ENCODE measurements at regions of chr1 and their contacts with region 1.

Region 1: DNA sequence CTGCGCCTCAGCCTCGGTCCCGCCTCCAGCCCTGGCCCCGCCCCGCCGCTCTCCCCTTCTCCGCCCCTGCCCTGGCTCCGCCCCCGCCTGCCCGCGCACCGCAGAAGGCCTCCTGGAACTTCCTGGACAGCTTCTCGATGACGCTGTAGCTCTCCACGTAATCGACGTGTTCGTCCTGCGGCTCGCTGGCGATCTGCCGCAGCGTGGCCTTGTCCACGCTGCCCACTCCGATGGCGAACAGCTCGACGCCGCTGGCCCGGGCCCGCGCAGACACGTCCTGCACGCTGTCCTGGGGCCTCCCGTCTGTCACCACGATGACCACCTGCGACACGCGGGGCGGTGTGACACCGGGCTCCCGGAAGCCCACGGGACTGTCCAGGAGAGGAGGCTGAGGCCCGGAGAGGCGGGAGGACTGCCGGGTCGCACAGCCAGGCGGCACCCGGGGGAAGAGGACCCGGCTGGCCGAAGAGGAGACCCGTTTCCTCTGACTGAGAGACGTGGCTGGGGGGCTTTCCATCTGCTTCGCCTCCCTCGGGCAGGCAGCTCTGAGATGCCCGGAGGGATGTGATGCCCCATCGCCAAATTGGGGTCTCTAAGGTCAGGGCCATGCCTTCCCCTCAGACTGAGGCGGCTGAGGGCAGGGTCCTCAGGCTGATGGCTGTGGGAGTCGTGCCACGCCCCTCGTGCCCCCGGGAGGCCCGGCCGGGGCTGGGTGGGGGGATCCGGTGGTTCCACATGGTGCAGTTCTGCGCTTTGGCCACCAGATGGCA is 4.6 kb downstream of the MATN1 start:
- DNase-seq: peak; percentile 91
- ATAC-seq: peak; percentile 66
- H3K4me3 Mint-ChIP-seq: peak overlapping the region; percentile 84
- H3K27ac Mint-ChIP-seq: peak overlapping the region; percentile 94
- H3K4me1 Mint-ChIP-seq: peaks cover 19% of the 10 kb centered on the region
- H3K27me3 Mint-ChIP-seq: no peaks in the 10 kb centered on the region

Region 2: DNA sequence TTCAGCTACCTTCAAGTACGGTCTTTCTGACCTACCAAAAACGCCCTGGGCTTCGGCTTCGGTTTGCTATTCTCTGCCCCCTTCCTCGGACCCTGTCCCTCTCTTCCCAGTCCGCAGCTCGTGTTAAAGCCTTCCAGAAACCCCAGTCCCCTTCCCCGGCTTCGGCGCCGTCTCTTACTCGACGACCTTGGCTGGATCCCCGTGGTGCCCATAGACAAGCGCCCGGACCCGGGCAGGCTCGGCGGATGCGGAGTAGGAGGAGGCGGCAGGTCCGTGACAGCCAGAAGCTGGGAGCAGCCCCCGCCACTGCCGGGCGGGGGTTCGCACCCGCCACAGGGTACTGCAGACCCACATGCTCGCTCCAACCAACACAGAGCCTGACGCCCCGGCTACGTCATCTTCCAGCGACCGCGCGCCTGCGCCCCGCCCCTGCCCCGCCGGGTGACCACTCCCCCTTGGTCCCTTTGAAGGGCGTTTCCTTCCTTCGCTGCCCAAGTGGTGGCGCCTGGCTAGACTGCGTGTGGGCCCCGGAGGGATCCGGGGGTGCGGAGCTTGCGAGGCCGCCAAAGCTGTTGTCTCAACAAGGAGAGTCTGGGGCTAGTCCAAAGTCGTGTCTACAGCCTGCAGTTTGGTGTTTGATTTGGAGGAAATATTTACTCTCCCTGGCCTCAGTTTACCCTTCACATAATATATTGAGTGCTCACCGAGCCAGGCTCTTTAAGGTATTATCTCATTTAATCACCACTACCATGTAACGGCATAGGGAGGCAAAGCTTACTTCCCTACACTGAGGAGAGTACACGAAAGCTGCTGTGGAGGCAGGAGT is 1488.1 kb before region 1 on chr1 and contains the start of gene MECR:
- CTCF ChIA-PET with region 1: interaction called, 3 read pairs
- POLR2A ChIA-PET with region 1: no interaction called
- intact Hi-C with region 1: loop called (anchors 1 to 2 kb)
- DNase-seq: peak; percentile 97
- ATAC-seq: peak; percentile 97
- H3K4me3 Mint-ChIP-seq: peak within 1 kb of the TSS; percentile 94
- H3K27ac Mint-ChIP-seq: peak within 1 kb of the TSS; percentile 94
- H3K4me1 Mint-ChIP-seq: peaks cover 18% of the 10 kb centered on the region
- H3K27me3 Mint-ChIP-seq: peaks cover 9% of the 10 kb centered on the region
- total RNA-seq, gene MECR: 41.3 to 43.1 TPM

Region 3: DNA sequence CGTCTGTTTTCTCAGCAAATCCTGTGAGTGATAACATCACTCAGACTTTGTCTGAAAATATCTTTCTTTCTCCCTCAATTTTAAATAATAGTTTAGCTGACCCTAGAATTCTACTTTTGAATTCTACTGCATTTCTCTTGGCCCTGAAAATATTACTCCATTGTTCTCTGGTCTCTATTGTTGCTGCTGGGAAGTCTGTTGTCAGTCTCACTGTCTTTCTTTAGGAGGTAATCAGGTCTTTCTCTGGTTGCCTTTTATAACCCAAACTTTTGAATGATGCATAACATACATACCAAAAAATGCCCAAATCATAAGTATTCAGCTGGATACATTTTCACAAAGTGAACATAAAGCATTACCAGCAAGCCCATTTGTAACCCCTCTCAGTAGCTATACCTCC is 95.4 kb before region 1 on chr1:
- CTCF ChIA-PET with region 1: no interaction called
- POLR2A ChIA-PET with region 1: no interaction called
- intact Hi-C with region 1: no loop called
- DNase-seq: no peak
- ATAC-seq: no peak
- H3K4me3 Mint-ChIP-seq: no peak overlapping the region
- H3K27ac Mint-ChIP-seq: no peak overlapping the region
- H3K4me1 Mint-ChIP-seq: peaks cover 3% of the 10 kb centered on the region
- H3K27me3 Mint-ChIP-seq: peaks cover 26% of the 10 kb centered on the region

Region 4: GRCh38 chr1:30637183-30637980 is 81.4 kb before region 1 on chr1:
- CTCF ChIA-PET with region 1: no interaction called
- POLR2A ChIA-PET with region 1: no interaction called
- intact Hi-C with region 1: no loop called
- DNase-seq: no peak
- ATAC-seq: no peak
- H3K4me3 Mint-ChIP-seq: no peak overlapping the region
- H3K27ac Mint-ChIP-seq: no peak overlapping the region
- H3K4me1 Mint-ChIP-seq: no peaks in the 10 kb centered on the region
- H3K27me3 Mint-ChIP-seq: peaks cover 2% of the 10 kb centered on the region

Region 5: DNA sequence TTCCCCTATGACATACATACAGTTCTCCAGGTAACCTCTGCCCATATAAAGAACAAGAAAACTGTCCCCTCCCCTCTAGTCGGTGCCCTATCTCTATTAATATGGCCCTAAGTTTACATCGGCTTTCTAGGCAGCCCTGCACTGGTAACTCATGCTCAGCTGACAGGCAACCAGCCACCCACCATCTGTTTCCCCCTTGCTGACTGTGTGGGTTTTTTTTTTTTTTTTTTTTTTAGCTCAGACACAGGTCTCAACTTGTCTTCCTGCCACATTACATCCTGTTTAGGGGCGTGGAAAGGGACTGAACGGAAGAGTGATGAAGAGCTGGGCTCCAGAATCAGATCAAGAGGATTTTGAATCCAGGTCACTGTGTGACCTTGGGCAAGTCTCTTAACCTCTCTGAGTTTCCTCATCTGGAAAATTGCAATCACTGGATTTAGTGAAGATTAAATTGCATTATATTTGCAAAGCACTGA is 24.8 kb after region 1 on chr1:
- CTCF ChIA-PET with region 1: interaction called, 47 read pairs
- POLR2A ChIA-PET with region 1: interaction called, 3 read pairs
- intact Hi-C with region 1: loop called (anchors 1 to 2 kb)
- DNase-seq: peak; percentile 81
- ATAC-seq: peak; percentile 78
- H3K4me3 Mint-ChIP-seq: peak overlapping the region; percentile 59
- H3K27ac Mint-ChIP-seq: peak overlapping the region; percentile 99
- H3K4me1 Mint-ChIP-seq: peaks cover 91% of the 10 kb centered on the region
- H3K27me3 Mint-ChIP-seq: no peaks in the 10 kb centered on the region

Region 6: DNA sequence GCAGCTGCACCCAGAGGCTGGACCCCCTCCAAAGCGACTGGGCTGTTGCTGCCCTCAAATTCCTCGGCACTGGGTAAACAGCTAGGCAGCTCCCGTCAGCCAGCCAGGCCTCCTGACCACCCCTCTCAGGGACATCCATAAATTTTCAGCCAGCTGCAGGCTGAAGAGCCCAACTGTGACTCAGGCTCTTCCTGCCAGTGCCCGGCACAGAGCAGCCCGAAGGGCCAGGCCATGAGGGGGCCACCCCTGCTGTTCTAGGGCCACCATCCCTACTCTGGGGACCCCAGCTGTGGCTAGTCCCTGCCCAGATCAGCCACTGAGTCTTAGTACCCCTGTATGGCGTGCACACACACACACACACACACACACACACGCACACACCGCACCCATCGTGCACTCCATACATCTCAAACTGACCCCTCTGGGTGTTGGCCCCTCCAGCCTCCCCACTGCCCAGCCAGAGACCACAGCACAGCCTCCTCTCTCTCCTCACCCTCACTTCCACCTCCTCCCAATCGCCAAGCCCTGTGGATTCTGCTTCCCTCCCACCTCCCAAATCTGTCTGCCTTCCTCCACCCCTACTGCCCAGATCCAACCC is 44.9 kb after region 1 on chr1:
- CTCF ChIA-PET with region 1: interaction called, 19 read pairs
- POLR2A ChIA-PET with region 1: interaction called, 5 read pairs
- intact Hi-C with region 1: no loop called
- DNase-seq: no peak
- ATAC-seq: no peak
- H3K4me3 Mint-ChIP-seq: no peak overlapping the region
- H3K27ac Mint-ChIP-seq: peak overlapping the region; percentile 48
- H3K4me1 Mint-ChIP-seq: peaks cover 79% of the 10 kb centered on the region
- H3K27me3 Mint-ChIP-seq: no peaks in the 10 kb centered on the region

Region 7: GRCh38 chr1:30929135-30929889 is 210.5 kb after region 1 on chr1:
- CTCF ChIA-PET with region 1: interaction called, 7 read pairs
- POLR2A ChIA-PET with region 1: no interaction called
- intact Hi-C with region 1: loop called (anchors 5 kb)
- DNase-seq: peak; percentile 75
- ATAC-seq: peak; percentile 82
- H3K4me3 Mint-ChIP-seq: no peak overlapping the region
- H3K27ac Mint-ChIP-seq: no peak overlapping the region
- H3K4me1 Mint-ChIP-seq: no peaks in the 10 kb centered on the region
- H3K27me3 Mint-ChIP-seq: no peaks in the 10 kb centered on the region

Region 8: GRCh38 chr1:31296486-31297276 is 577.9 kb after region 1 on chr1 and contains the starts of genes SNRNP40 and ZCCHC17:
- CTCF ChIA-PET with region 1: interaction called, 4 read pairs
- POLR2A ChIA-PET with region 1: no interaction called
- intact Hi-C with region 1: loop called (anchors 1 to 5 kb)
- DNase-seq: peak; percentile 94
- ATAC-seq: peak; percentile 98
- H3K4me3 Mint-ChIP-seq: no peak within 1 kb of the TSS
- H3K27ac Mint-ChIP-seq: no peak within 1 kb of the TSS
- H3K4me1 Mint-ChIP-seq: peaks cover 34% of the 10 kb centered on the region
- H3K27me3 Mint-ChIP-seq: no peaks in the 10 kb centered on the region
- total RNA-seq, gene SNRNP40: 101 to 111 TPM
- total RNA-seq, gene ZCCHC17: 23.9 to 28.8 TPM

Region 9: GRCh38 chr1:31372961-31373896 is 654.4 kb after region 1 on chr1 and contains the start of gene FABP3:
- CTCF ChIA-PET with region 1: no interaction called
- POLR2A ChIA-PET with region 1: no interaction called
- intact Hi-C with region 1: no loop called
- DNase-seq: peak; percentile 46
- ATAC-seq: peak; percentile 47
- H3K4me3 Mint-ChIP-seq: peak within 1 kb of the TSS; percentile 51
- H3K27ac Mint-ChIP-seq: peak within 1 kb of the TSS; percentile 26
- H3K4me1 Mint-ChIP-seq: peaks cover 13% of the 10 kb centered on the region
- H3K27me3 Mint-ChIP-seq: no peaks in the 10 kb centered on the region
- total RNA-seq, gene FABP3: not detected

Measured in activated CD4-positive, alpha-beta T cell treated with anti-CD3 and anti-CD28 coated beads for 36 hours (primary cell).